Adrenal gland (tissue), 19 donors: ENCODE measurements at regions of chr2 and their contacts with region 1.

Region 1: DNA sequence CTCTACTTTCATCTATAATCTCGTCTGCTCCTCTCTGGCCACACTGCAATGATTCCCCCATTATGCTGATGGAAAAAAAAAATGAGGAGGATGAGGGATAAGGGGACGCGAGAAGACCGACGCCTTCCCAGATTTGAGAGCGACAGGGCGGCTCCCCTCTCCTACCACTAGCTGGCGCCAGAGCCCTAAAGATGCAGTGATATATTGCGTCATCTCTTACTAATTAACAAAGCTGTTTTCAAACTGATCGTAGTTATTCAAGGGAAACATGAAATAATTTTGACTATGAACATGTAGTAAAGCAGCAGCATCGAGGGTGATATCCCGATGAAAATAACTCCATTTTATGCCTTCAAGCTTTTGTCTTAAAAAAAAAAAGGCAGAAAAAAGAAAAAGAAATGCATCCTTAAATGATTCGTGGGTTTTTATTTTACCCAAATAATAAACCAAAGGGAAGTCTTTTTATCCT is 48.0 kb upstream of the HNRNPA3 start:
- DNase-seq: peak; percentile 78 to 96 (median 87)
- H3K4me3 ChIP-seq: peak overlapping the region in 2 of 4 donors; percentile 26 to 51
- H3K27ac ChIP-seq: peak overlapping the region; percentile 83 to 95 (median 94)
- H3K4me1 ChIP-seq: peaks cover 16 to 29% of the 10 kb centered on the region in 2 donors
- H3K27me3 ChIP-seq: no peaks in the 10 kb centered on the region
- CTCF ChIP-seq: peak; percentile 96 to 100 (median 100)
- POLR2A ChIP-seq: no peak

Region 2: DNA sequence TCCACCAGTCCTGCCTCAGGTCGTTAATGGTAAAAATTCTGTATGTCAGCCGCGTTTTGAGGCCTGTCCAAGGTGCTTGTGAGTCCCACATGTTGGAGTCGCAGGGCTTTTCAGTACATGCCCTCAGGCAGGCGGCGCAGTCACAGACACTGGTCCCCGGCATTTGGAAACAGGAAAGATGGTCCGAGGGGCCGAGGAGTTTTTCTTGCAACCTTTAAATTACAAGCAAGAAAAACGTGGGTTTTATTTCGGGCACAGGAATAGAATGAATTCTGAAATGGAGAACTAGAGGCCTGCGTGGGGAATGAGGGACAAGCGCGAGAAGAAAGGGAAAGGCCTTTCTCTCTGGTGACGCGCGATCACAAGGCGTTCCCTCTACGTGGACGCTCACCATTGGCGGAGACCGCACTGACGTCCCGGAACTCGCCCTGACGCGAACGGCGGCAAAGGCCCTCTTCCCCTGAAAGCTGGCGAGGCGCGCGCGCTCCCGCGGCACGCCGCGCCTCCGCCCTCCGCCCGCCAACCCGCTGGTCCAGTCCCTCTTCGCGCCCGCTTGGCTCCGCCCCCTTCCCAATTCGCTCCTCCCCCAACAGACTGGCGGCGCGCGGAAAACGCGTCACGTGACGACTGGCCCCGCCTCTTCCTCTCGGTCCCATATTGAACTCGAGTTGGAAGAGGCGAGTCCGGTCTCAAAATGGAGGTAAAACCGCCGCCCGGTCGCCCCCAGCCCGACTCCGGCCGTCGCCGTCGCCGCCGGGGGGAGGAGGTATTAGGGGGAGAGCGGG is 47.7 kb after region 1 on chr2 and contains the start of gene HNRNPA3:
- intact Hi-C with region 1: loop called in 1 of 2 experiments (anchors 10 kb)
- DNase-seq: peak; percentile 99 to 100 (median 99)
- H3K4me3 ChIP-seq: peak within 1 kb of the TSS; percentile 48 to 81 (median 79)
- H3K27ac ChIP-seq: peak within 1 kb of the TSS; percentile 99 to 100 (median 100)
- H3K4me1 ChIP-seq: peaks cover 36 to 46% of the 10 kb centered on the region in 2 donors
- H3K27me3 ChIP-seq: no peaks in the 10 kb centered on the region
- CTCF ChIP-seq: peak in 3 of 6 experiments; percentile 17 to 37 (median 21)
- POLR2A ChIP-seq: peak; percentile 97
- total RNA-seq, gene HNRNPA3: 22.6 to 131 (median 47.4) TPM

Region 3: DNA sequence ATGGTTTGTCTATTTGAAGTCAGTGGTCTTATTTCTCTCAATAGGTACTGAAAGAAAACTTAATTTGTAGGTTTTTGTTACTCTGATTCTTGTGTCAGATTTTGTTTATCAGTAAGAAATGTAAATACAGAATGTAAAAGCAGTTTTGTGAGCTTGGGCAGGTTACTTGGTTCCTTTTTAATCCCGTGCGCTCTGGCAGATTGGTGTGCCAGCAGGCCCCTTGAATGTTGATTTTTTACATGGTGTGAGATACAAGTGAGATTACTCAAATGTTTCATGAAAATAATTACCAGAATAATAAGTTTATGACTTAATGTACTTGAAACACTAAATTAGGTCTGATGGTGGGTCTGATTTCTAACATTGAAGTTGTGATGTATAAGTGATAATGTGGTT is 61.3 kb after region 1 on chr2:
- intact Hi-C with region 1: no loop called
- DNase-seq: no peak
- H3K4me3 ChIP-seq: no peak overlapping the region
- H3K27ac ChIP-seq: peak overlapping the region in 2 of 5 donors; percentile 2 to 29
- H3K4me1 ChIP-seq: no peaks in the 10 kb centered on the region
- H3K27me3 ChIP-seq: no peaks in the 10 kb centered on the region
- CTCF ChIP-seq: no peak
- POLR2A ChIP-seq: no peak

Region 4: GRCh38 chr2:177263451-177264208 is 99.0 kb after region 1 on chr2:
- intact Hi-C with region 1: loop called in 1 of 2 experiments (anchors 10 kb)
- DNase-seq: peak; percentile 98 to 99 (median 99)
- H3K4me3 ChIP-seq: peak overlapping the region; percentile 79 to 96 (median 84)
- H3K27ac ChIP-seq: peak overlapping the region; percentile 98 to 100 (median 99)
- H3K4me1 ChIP-seq: peaks cover 21 to 48% of the 10 kb centered on the region in 2 donors
- H3K27me3 ChIP-seq: no peaks in the 10 kb centered on the region
- CTCF ChIP-seq: peak; percentile 70 to 97 (median 86)
- POLR2A ChIP-seq: peak; percentile 73 to 83

Region 5: GRCh38 chr2:177325270-177325929 is 160.8 kb after region 1 on chr2:
- intact Hi-C with region 1: loop called (anchors 5 kb)
- DNase-seq: no peak
- H3K4me3 ChIP-seq: no peak overlapping the region
- H3K27ac ChIP-seq: no peak overlapping the region
- H3K4me1 ChIP-seq: no peaks in the 10 kb centered on the region
- H3K27me3 ChIP-seq: no peaks in the 10 kb centered on the region
- CTCF ChIP-seq: no peak
- POLR2A ChIP-seq: no peak

Region 6: GRCh38 chr2:177332041-177332991 is 167.7 kb after region 1 on chr2:
- intact Hi-C with region 1: loop called (anchors 5 kb)
- DNase-seq: peak; percentile 41 to 72 (median 65)
- H3K4me3 ChIP-seq: no peak overlapping the region
- H3K27ac ChIP-seq: peak overlapping the region in 4 of 5 donors; percentile 17 to 55 (median 32)
- H3K4me1 ChIP-seq: peaks cover 0 to 5% of the 10 kb centered on the region in 2 donors
- H3K27me3 ChIP-seq: no peaks in the 10 kb centered on the region
- CTCF ChIP-seq: peak; percentile 22 to 90 (median 70)
- POLR2A ChIP-seq: no peak

Region 7: DNA sequence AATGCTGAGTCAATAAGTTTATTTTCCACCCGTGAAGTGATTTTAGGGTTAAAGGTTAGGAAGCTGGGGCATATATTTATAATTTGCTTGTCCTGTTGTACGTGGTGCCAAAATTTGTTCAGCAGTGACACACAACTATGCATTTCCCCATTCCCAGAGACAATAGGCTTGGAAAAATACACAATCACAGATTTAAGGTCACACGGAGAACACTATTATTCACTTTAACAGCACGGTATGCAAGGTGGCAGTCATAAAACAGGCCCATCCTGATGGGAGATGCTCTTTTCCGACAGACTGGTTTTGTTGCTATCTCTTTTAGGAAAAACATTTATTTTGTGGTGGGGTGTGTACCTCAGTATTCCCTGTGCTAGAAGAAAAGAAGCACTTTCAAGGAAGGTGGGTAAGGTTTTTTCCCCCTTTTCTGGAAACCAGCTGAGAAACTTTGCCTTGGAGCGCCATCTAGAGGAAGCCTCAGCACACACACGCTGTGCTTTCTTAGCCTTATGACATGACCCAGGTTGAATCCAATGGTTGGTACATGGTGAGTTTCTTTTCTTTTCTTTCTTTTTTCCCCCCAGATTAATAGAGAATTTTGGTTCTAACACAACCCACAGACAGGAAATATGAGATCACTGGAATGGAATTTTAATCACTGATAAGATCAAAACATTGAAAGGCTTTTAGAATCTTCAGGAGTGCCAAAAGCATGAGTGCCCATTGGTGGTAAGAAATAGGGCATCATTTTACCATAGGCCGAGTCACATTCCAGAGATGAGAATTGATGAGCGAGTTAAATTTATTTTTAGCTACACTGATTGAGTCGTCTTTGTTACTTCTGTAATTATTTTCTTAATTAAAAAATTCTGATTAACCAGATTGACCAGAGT is 560.0 kb after region 1 on chr2:
- intact Hi-C with region 1: loop called in 1 of 2 experiments (anchors 10 kb)
- DNase-seq: peak; percentile 39 to 75 (median 54)
- H3K4me3 ChIP-seq: no peak overlapping the region
- H3K27ac ChIP-seq: no peak overlapping the region
- H3K4me1 ChIP-seq: peaks cover 4 to 9% of the 10 kb centered on the region in 2 donors
- H3K27me3 ChIP-seq: no peaks in the 10 kb centered on the region
- CTCF ChIP-seq: peak; percentile 79 to 86 (median 82)
- POLR2A ChIP-seq: no peak

Region 8: DNA sequence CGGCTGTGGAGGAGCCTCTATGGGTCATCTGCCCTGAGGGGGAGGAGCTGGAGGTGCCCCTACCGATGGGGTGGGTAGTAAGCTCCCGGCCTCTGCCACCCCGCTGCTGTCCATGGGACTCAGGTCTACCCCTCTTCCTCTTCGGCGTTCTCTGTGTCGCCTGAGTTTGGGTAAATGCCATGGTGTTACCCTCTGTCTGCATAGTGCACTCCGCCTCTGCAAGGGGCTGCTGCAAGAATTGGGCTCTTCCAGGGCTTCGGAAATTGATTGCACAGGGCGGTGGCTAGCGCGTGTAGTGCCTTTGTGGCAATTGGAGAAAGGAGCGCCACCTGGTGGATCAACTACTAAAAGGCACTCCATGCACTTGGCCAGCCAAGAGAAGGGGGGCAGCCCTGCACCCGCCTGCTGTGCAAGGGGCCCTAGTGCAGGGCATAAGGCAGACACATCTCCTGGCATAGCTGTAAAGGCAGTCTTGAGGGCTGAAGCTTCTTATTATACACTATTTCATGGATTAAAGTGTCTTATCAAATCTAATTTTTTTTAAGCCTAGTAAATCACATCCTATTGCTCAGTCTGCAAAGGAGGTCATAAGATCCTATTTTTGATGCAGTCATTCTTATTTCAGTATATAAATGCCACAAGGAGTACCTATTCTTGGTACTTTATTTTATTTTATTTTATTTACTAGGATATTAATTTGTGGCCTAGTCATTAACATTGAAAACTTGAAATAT is 599.1 kb after region 1 on chr2:
- intact Hi-C with region 1: loop called in 1 of 2 experiments (anchors 10 kb)
- DNase-seq: peak; percentile 72 to 90 (median 81)
- H3K4me3 ChIP-seq: no peak overlapping the region
- H3K27ac ChIP-seq: no peak overlapping the region
- H3K4me1 ChIP-seq: no peaks in the 10 kb centered on the region
- H3K27me3 ChIP-seq: no peaks in the 10 kb centered on the region
- CTCF ChIP-seq: peak; percentile 64 to 89 (median 74)
- POLR2A ChIP-seq: no peak